ENCODE measurements at regions of chr16 and their contacts with region 1.

Region 1: GRCh38 chr16:74591876-74592614 is 14.9 kb downstream of the GLG1 start:
- DNase-seq: no peak

Region 2: GRCh38 chr16:74560912-74561311 is 31.1 kb before region 1 on chr16:
- intact Hi-C with region 1: loop called (anchors 1 kb)
- DNase-seq: peak in 1 of 10 donors; percentile 14

Region 3: GRCh38 chr16:75590920-75591843 is 999.1 kb after region 1 on chr16:
- intact Hi-C with region 1: no loop called
- DNase-seq: peak in 5 of 10 donors; percentile 16 to 44 (median 23)